MCF 10A (cell line): ENCODE measurements at regions of chr11 and their contacts with region 1.

Region 1: GRCh38 chr11:76512851-76513653 is 68.2 kb downstream of the EMSY start:
- DNase-seq: peak; percentile 26
- H3K4me3 Mint-ChIP-seq: no peak overlapping the region
- H3K27ac Mint-ChIP-seq: no peak overlapping the region
- H3K4me1 Mint-ChIP-seq: no peaks in the 10 kb centered on the region
- H3K27me3 Mint-ChIP-seq: no peaks in the 10 kb centered on the region
- CTCF ChIP-seq: peak; percentile 33

Region 2: GRCh38 chr11:75896843-75897419 is 616.1 kb before region 1 on chr11:
- CTCF ChIA-PET with region 1: interaction called, 3 read pairs
- POLR2A ChIA-PET with region 1: no interaction called
- intact Hi-C with region 1: loop called (anchors 5 kb)
- DNase-seq: peak; percentile 54
- H3K4me3 Mint-ChIP-seq: no peak overlapping the region
- H3K27ac Mint-ChIP-seq: no peak overlapping the region
- H3K4me1 Mint-ChIP-seq: no peaks in the 10 kb centered on the region
- H3K27me3 Mint-ChIP-seq: no peaks in the 10 kb centered on the region
- CTCF ChIP-seq: peak; percentile 54

Region 3: GRCh38 chr11:75959540-75959939 is 553.5 kb before region 1 on chr11:
- CTCF ChIA-PET with region 1: no interaction called
- POLR2A ChIA-PET with region 1: no interaction called
- intact Hi-C with region 1: no loop called
- DNase-seq: no peak
- H3K4me3 Mint-ChIP-seq: no peak overlapping the region
- H3K27ac Mint-ChIP-seq: no peak overlapping the region
- H3K4me1 Mint-ChIP-seq: peaks cover 2% of the 10 kb centered on the region
- H3K27me3 Mint-ChIP-seq: no peaks in the 10 kb centered on the region
- CTCF ChIP-seq: no peak

Region 4: DNA sequence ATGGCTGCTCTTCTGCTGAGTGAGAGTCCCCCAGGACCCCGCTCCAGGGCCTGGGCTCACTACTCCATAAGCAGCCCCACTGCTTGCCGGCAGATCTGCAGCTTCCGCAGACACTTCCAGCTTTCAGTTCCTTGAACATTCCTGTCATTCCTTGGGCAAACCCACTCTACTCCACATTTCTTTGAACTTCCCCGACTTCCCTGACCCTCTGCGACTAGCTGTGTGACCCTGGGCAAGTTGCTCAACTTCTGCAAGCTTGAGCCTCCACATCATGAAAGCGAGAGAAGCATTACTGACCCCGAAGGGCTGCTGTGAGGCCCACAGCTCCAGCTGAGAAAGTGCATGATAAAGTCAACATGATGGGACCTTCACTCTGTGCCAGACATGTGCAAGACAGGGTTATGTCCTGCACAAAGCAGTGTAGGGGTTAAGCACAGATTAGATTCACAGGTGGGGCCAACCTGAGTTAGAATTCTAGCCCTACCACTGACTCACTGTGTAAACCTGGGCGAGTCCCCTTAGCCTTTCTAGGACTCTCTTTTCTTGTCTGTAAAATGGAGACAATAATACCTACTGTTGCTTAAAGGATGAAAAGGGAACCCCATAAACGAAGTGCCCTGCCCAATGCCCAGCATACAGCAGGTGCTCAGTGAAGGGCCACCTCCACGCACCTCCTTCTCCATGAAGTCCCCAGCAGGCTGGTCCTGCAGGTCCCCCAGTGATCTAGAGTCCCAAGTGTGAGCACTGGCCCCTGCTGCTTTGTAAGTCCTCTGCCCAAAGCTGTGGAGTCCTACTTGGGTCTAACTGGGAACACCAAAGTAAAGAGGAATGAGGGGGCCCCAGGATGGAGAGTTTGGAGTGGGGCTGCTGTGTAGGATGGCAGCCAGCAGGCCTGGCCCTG is 183.7 kb before region 1 on chr11:
- CTCF ChIA-PET with region 1: interaction called, 5 read pairs
- POLR2A ChIA-PET with region 1: no interaction called
- intact Hi-C with region 1: loop called (anchors 10 kb)
- DNase-seq: no peak
- H3K4me3 Mint-ChIP-seq: no peak overlapping the region
- H3K27ac Mint-ChIP-seq: no peak overlapping the region
- H3K4me1 Mint-ChIP-seq: no peaks in the 10 kb centered on the region
- H3K27me3 Mint-ChIP-seq: no peaks in the 10 kb centered on the region
- CTCF ChIP-seq: no peak

Region 5: DNA sequence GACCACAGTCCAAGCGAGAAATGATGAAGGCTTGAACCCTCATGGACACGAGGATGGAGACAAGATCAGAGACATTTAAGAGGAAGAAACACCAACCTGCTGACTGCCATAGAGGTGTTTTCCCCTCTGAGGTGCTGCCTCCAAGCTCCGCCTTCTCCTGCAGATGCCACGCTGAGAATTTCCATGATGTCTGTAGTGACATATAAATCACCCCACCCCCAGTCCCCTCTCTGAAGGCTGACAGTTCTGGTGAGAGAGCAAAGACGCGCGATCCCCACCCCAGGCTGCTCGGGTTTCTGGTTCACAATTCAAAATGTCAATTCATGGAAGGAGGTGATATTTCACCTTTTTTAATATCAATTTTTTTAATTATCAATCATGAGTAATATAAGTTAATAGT is 129.3 kb after region 1 on chr11:
- CTCF ChIA-PET with region 1: no interaction called
- POLR2A ChIA-PET with region 1: no interaction called
- intact Hi-C with region 1: no loop called
- DNase-seq: no peak
- H3K4me3 Mint-ChIP-seq: no peak overlapping the region
- H3K27ac Mint-ChIP-seq: no peak overlapping the region
- H3K4me1 Mint-ChIP-seq: no peaks in the 10 kb centered on the region
- H3K27me3 Mint-ChIP-seq: peaks cover 73% of the 10 kb centered on the region
- CTCF ChIP-seq: no peak